Left ventricle myocardium superior (tissue), 1 donor: ENCODE measurements at regions of chr10 and their contacts with region 1.

Region 1: DNA sequence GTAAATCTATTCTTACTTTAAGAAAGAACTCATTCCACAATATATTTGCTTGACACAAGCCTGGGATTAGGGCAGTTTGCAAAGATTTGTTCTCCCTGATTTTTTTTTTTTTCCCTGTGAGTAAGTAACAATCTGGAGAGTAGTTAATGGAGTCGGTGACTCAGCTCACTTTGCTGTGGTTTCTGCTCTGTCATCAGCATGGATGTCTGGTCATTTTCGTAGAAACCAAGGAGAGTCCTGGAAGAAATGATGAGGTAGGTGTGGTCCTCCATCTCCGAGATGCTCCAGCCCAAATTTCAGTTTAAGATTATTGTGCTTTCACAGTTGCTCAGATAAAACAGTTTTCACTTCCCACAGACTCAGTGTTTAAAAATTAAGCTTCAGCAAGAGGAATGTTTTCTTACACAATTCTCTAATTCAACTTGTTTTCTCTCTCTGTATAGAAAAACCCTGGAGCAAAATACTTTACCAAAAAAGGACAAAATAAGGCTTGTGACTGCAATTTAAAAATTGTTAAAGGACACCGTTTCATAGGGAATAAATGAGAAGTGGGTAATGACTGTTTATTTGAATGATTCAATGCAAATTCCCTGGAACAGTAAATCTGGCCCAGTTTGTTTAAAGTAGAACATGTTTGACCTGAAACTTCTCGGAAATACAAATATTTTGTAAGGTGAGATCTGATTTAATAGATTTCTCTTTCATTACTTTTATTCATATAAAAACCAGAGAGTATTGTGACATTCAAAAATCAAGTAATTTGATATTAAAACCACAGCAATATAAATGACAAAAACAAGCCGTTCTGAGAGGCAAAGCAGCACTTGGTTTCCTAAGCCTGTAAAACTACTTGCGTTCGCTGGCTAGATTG is 76.5 kb upstream of the PITRM1 start:
- DNase-seq: no peak
- ATAC-seq: peak; percentile 53

Region 2: DNA sequence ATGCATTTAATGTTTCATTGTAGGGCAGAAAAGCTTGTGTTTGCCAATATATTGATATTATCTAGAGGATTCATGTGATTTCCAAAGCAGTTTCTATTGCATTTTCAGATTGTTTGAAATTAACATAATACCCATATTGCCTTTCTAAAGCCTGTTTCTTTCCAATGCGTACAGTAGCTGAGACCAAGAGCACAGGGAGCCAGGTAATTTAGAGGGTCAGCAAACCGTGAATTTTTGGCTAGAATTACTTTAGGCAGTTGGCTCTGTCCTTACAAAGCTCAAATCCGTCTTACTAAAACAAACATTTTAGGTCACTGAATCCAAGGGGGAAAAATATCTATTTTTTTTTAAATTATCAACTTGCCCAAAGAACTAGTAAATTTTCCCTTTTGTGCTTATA is 906.9 kb before region 1 on chr10:
- intact Hi-C with region 1: no loop called
- DNase-seq: no peak
- ATAC-seq: no peak

Region 3: DNA sequence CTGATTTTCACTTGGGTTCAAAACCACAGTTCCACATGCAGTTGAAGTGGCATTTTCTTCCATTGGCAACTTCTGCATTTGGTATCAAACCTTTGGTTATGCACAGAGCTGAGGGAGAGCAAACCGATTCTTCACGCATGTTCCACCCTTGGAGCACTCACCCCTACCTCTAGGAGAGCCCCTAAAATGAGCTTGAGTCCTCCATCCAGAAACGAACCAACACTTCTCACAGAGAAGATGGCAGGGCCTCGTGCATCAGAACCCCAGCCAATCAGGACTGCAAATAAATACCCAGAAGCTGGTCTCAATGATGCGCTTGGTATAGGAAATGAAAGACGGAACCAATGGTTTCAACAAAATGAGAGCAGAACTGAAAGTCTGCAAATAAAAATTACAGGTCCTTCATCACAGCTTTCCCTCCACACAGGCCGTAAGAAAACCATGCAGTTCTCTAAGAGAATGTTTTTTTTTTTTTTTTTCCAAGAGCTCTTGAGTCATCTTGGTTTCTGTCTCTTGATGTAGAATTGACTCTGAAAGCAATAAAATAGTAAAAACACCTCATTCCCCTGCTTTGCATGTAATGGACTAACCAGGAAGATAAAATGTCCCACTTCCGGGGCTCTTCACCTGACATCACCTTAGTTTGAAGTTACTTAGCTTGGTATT is 512.0 kb after region 1 on chr10:
- intact Hi-C with region 1: loop called (anchors 10 kb)
- DNase-seq: no peak
- ATAC-seq: no peak